Activated CD4-positive, alpha-beta T cell treated with anti-CD3 and anti-CD28 coated beads, Interleukin-2, amount 10 ng/mL, durations not matched to agents 24 days and 14 days (primary cell): ENCODE measurements at regions of chr13 and their contacts with region 1.

Region 1: DNA sequence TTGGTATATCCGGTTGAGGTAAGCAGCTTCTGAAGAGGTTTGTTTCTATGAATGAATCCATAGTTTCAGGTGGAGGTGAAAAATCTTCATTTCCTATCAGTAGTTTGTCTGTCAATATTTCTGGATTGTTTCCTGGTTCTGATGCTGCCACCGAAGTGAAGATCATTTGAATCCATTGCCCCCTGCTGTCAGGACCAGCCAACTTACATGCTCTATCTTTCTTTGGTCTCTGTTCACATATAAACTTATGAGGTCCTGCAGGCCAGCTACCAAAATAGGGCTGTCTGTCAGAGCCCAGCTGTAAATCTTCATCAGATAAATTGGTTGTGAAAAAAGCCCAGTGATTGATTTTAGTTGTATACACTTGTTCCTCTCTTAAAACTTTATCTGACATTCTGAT is 15.2 kb upstream of the N4BP2L1 start:
- DNase-seq: peak; percentile 78
- H3K4me3 Mint-ChIP-seq: no peak overlapping the region
- H3K27ac Mint-ChIP-seq: no peak overlapping the region
- H3K4me1 Mint-ChIP-seq: peaks cover 9% of the 10 kb centered on the region
- H3K27me3 Mint-ChIP-seq: no peaks in the 10 kb centered on the region

Region 2: GRCh38 chr13:31605076-31605858 is 837.8 kb before region 1 on chr13:
- intact Hi-C with region 1: no loop called
- DNase-seq: peak; percentile 35
- H3K4me3 Mint-ChIP-seq: no peak overlapping the region
- H3K27ac Mint-ChIP-seq: no peak overlapping the region
- H3K4me1 Mint-ChIP-seq: no peaks in the 10 kb centered on the region
- H3K27me3 Mint-ChIP-seq: no peaks in the 10 kb centered on the region

Region 3: DNA sequence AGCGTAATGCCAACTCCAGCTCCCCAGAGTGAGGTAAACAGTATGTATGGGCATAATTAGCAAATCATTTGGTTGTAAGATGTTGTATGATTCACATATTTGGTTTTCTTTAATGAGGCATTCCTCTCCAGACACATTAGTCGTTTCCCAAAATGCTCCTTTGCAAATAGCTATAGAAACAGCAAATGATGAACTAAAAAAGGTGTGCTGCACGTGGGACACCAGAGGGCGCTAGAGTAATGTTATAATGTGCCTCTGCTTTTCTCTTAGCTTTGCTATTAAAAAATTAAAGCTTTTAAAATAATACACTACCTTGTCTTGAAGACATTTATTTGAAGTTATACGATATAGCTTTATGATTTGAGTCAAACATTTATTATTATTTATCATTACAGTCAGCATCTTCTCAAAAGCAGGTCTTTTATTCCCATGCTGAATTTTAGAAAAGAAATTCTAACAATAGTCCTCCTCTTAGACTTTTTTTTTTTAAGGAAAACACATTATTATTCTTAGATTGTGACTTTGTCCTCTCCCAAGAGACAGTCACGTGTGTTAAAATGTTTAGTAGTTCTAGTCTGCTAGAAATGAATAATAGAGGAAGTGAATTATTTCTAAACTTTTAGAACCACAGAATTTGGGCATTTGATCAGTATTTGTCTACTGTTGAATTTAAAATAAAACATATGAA is 533.1 kb before region 1 on chr13:
- intact Hi-C with region 1: loop called (anchors 5 kb)
- DNase-seq: peak; percentile 86
- H3K4me3 Mint-ChIP-seq: no peak overlapping the region
- H3K27ac Mint-ChIP-seq: no peak overlapping the region
- H3K4me1 Mint-ChIP-seq: peaks cover 14% of the 10 kb centered on the region
- H3K27me3 Mint-ChIP-seq: peaks cover 31% of the 10 kb centered on the region

Region 4: DNA sequence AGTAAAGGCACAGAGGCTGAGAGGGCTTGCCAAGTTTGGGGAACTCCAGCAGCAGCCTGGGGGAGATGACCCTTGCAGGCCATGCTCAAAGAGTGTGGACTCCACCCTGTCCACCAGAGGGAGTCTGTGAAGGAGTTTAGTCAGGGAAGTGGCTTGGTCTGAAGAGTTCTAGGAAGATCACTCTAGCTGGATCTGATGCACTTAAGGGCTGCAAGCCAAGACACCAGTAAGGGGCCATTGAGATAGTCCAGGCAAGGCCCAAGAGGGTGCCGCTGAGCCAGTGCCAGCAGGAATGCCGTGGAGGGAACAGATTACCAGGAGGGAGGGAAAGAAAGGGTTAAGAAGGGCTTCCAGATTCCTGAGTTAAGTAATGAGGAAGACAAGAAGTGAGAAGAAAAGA is 196.6 kb before region 1 on chr13:
- intact Hi-C with region 1: loop called (anchors 10 kb)
- DNase-seq: peak; percentile 82
- H3K4me3 Mint-ChIP-seq: no peak overlapping the region
- H3K27ac Mint-ChIP-seq: no peak overlapping the region
- H3K4me1 Mint-ChIP-seq: peaks cover 3% of the 10 kb centered on the region
- H3K27me3 Mint-ChIP-seq: no peaks in the 10 kb centered on the region

Region 5: DNA sequence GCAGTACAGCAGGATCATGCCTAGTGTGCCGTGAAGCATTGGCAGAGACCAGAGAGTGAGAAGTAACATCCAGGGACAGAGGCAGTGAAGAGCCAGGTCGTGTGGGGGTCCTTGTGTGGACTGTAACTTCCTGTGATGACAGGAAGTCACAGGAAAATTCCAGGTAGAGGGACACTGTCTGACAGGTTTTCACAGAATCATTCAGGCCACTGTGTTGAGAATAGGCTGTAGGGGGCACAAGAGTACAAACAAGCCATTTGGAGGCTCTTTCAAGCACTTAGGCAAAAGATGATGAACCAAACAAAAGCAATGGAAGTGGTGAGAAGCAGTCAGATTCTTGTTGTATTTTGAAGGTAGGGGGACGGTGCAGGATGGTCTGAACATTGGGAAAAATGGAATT is 61.6 kb before region 1 on chr13:
- intact Hi-C with region 1: loop called (anchors 2 kb)
- DNase-seq: peak; percentile 79
- H3K4me3 Mint-ChIP-seq: no peak overlapping the region
- H3K27ac Mint-ChIP-seq: no peak overlapping the region
- H3K4me1 Mint-ChIP-seq: peaks cover 1% of the 10 kb centered on the region
- H3K27me3 Mint-ChIP-seq: no peaks in the 10 kb centered on the region

Region 6: GRCh38 chr13:32415019-32415418 is 28.1 kb before region 1 on chr13:
- intact Hi-C with region 1: no loop called
- DNase-seq: peak; percentile 68
- H3K4me3 Mint-ChIP-seq: no peak overlapping the region
- H3K27ac Mint-ChIP-seq: no peak overlapping the region
- H3K4me1 Mint-ChIP-seq: peaks cover 2% of the 10 kb centered on the region
- H3K27me3 Mint-ChIP-seq: no peaks in the 10 kb centered on the region

Region 7: GRCh38 chr13:32586080-32586900 is 143.2 kb after region 1 on chr13 and contains the start of gene PDS5B:
- intact Hi-C with region 1: no loop called
- DNase-seq: peak; percentile 98
- H3K4me3 Mint-ChIP-seq: peak within 1 kb of the TSS; percentile 86
- H3K27ac Mint-ChIP-seq: peak within 1 kb of the TSS; percentile 95
- H3K4me1 Mint-ChIP-seq: peaks cover 36% of the 10 kb centered on the region
- H3K27me3 Mint-ChIP-seq: peaks cover 9% of the 10 kb centered on the region
- total RNA-seq, gene PDS5B: 60.3 and 70.2 TPM in 2 replicates